ENCODE measurements at regions of chr17 and their contacts with region 1.

Region 1: DNA sequence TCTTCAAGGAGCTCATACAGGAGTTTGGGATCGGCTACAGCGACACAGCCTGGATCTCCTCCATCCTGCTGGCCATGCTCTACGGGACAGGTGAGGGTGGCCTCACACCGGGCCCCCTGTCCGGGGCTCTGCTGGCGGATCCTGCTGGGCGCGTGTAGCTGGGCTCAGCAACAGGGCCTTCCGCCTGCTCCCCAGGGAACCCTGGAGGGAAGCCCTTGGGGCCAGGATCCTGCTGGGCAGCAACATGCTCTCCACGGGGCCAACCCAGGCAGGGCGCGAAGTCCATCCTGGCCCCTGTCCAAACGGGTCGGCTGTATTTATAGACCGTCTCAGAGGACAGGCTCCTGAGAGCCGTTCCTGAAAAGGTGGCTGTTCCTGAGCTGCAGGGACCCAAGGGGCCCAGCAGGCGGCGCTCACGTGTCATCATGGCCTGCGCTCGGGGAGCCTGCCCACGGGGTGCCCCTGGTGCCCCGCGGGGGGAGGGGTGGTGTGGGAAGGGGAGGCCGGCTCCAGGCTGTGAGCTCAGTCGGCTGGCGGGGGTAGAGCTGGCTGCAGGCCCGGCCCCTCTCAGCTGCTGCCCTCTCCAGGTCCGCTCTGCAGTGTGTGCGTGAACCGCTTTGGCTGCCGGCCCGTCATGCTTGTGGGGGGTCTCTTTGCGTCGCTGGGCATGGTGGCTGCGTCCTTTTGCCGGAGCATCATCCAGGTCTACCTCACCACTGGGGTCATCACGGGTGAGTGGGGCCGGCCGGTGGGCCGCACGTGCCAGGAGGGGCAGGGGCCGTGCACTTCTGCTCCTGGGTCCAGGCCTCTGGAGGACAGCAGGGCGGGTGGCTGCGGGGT is 7.5 kb downstream of the SLC16A3 start:
- DNase-seq: peak; percentile 69 to 74 (median 72)
- H3K4me3 ChIP-seq: no peak overlapping the region
- H3K4me3 Mint-ChIP-seq: peak overlapping the region in 1 of 8 donors; percentile 35
- H3K27ac ChIP-seq: peak overlapping the region; percentile 15
- H3K27ac Mint-ChIP-seq: peak overlapping the region in 5 of 7 donors; percentile 41 to 67 (median 64)
- H3K4me1 ChIP-seq: peaks cover 63% of the 10 kb centered on the region
- H3K4me1 Mint-ChIP-seq: peaks cover 10 to 58% (median 39%) of the 10 kb centered on the region in 4 donors
- H3K27me3 ChIP-seq: no peaks in the 10 kb centered on the region
- H3K27me3 Mint-ChIP-seq: no peaks in the 10 kb centered on the region

Region 2: DNA sequence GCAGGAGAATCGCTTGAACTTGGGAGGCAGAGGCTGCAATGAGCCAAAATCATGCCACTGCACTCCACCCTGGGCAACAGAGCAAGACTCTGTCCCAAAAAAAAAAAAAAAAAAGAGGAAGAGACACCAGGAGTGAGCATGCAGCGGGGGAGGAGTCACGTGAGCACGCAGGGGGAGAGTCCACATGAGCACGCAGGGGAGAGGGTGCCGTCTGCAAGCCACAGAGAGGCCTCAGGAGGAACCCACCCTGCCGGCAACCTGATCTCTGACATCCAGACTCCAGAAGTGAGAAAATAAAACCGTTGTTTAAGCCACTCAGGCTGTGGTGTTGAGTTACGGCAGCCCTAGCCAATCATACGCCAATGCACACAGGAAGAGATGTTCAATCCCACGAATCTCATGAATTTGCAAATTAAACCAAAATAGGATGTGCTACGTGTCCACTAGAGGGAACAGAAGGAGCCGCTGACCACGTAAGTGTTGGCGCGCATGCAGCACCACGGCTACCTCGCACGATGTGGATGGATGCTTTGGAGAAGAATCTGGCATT is 65.9 kb before region 1 on chr17:
- CTCF ChIA-PET with region 1: no interaction called
- POLR2A ChIA-PET with region 1: no interaction called
- intact Hi-C with region 1: no loop called
- DNase-seq: no peak
- H3K4me3 ChIP-seq: no peak overlapping the region
- H3K4me3 Mint-ChIP-seq: no peak overlapping the region
- H3K27ac ChIP-seq: no peak overlapping the region
- H3K27ac Mint-ChIP-seq: peak overlapping the region in 1 of 7 donors; percentile 66
- H3K4me1 ChIP-seq: no peaks in the 10 kb centered on the region
- H3K4me1 Mint-ChIP-seq: peaks cover 0 to 7% (median 0%) of the 10 kb centered on the region in 4 donors
- H3K27me3 ChIP-seq: no peaks in the 10 kb centered on the region
- H3K27me3 Mint-ChIP-seq: no peaks in the 10 kb centered on the region

Region 3: GRCh38 chr17:82205719-82206508 is 30.4 kb before region 1 on chr17:
- CTCF ChIA-PET with region 1: interaction called, 14 read pairs
- POLR2A ChIA-PET with region 1: interaction called, 35 read pairs
- intact Hi-C with region 1: no loop called
- DNase-seq: peak; percentile 84 to 87 (median 86)
- H3K4me3 ChIP-seq: no peak overlapping the region
- H3K4me3 Mint-ChIP-seq: peak overlapping the region in 7 of 8 donors; percentile 39 to 81 (median 54)
- H3K27ac ChIP-seq: peak overlapping the region; percentile 61
- H3K27ac Mint-ChIP-seq: peak overlapping the region; percentile 96 to 99 (median 97)
- H3K4me1 ChIP-seq: peaks cover 26% of the 10 kb centered on the region
- H3K4me1 Mint-ChIP-seq: peaks cover 20 to 46% (median 33%) of the 10 kb centered on the region in 4 donors
- H3K27me3 ChIP-seq: no peaks in the 10 kb centered on the region
- H3K27me3 Mint-ChIP-seq: no peaks in the 10 kb centered on the region

Region 4: DNA sequence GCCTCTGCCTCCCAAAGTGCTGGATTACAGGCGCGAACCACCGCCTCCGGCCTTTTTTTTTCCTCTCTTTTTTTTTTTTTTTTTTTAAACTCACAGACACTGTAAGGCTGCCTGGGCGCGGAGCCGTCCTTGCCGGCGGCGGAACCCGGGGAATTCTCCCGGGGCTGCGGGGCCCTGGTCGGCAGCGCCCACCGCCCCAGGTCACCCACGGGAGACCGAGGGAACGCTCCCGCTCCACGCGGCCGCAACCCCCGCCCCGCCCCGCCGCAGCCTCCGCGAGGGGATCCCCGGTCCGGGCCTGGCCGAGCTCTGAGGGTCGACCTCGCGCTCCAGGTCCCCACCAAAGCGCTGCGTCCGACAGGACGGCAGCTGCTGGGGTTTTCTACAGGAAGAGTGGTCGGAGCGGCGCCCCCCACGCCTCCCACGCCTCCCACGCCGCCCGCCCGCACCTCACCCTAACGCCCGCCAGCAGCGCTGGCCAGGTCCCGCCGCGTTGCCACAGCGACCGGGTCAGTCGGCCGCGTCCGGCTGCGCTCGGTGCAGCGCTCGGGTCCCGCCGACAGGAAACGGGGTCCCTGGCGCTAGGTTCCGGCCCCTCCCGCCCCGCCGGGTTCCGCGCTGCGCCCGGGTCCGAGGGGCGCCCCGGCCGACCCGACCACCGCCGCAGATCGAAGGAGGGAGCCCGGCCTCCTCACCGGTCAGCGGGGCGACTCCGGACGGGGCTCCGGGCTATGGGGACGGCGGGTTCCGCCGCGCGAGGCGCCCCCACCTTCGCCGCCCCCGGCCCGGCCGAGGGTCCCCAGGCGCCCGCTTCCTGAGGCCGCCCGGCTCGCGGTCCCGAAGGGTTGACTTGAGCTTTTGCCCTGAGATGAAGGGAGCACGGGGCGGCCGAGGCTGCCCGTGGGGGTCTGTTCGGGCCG is 23.8 kb before region 1 on chr17 and contains the start of gene CCDC57:
- CTCF ChIA-PET with region 1: interaction called, 10 read pairs
- POLR2A ChIA-PET with region 1: interaction called, 7 read pairs
- intact Hi-C with region 1: no loop called
- DNase-seq: peak in 4 of 5 donors; percentile 33 to 55 (median 44)
- H3K4me3 ChIP-seq: peak within 1 kb of the TSS; percentile 3 to 64
- H3K4me3 Mint-ChIP-seq: peak within 1 kb of the TSS; percentile 85 to 94 (median 88)
- H3K27ac ChIP-seq: peak within 1 kb of the TSS; percentile 58
- H3K27ac Mint-ChIP-seq: peak within 1 kb of the TSS; percentile 8 to 98 (median 91)
- H3K4me1 ChIP-seq: peaks cover 49% of the 10 kb centered on the region
- H3K4me1 Mint-ChIP-seq: peaks cover 12 to 40% (median 29%) of the 10 kb centered on the region in 4 donors
- H3K27me3 ChIP-seq: no peaks in the 10 kb centered on the region
- H3K27me3 Mint-ChIP-seq: no peaks in the 10 kb centered on the region
- total RNA-seq, gene CCDC57: 80.5 to 88.7 TPM

Region 5: GRCh38 chr17:82273327-82274133 is 37.2 kb after region 1 on chr17 and contains the start of gene CSNK1D:
- CTCF ChIA-PET with region 1: interaction called, 3 read pairs
- POLR2A ChIA-PET with region 1: interaction called, 4 read pairs
- intact Hi-C with region 1: loop called (anchors 2 kb)
- DNase-seq: peak; percentile 88 to 94 (median 90)
- H3K4me3 ChIP-seq: peak within 1 kb of the TSS; percentile 47 to 76
- H3K4me3 Mint-ChIP-seq: peak within 1 kb of the TSS; percentile 91 to 96 (median 94)
- H3K27ac ChIP-seq: peak within 1 kb of the TSS; percentile 80
- H3K27ac Mint-ChIP-seq: peak within 1 kb of the TSS; percentile 92 to 100 (median 98)
- H3K4me1 ChIP-seq: peaks cover 50% of the 10 kb centered on the region
- H3K4me1 Mint-ChIP-seq: peaks cover 31 to 53% (median 40%) of the 10 kb centered on the region in 4 donors
- H3K27me3 ChIP-seq: no peaks in the 10 kb centered on the region
- H3K27me3 Mint-ChIP-seq: no peaks in the 10 kb centered on the region
- total RNA-seq, gene CSNK1D: 182 TPM

Region 6: GRCh38 chr17:82292251-82293154 is 56.1 kb after region 1 on chr17:
- CTCF ChIA-PET with region 1: interaction called, 28 read pairs
- POLR2A ChIA-PET with region 1: interaction called, 56 read pairs
- intact Hi-C with region 1: no loop called
- DNase-seq: peak; percentile 92 to 95 (median 92)
- H3K4me3 ChIP-seq: peak overlapping the region; percentile 42 to 66
- H3K4me3 Mint-ChIP-seq: peak overlapping the region; percentile 85 to 95 (median 91)
- H3K27ac ChIP-seq: peak overlapping the region; percentile 84
- H3K27ac Mint-ChIP-seq: peak overlapping the region; percentile 90 to 97 (median 95)
- H3K4me1 ChIP-seq: peaks cover 24% of the 10 kb centered on the region
- H3K4me1 Mint-ChIP-seq: peaks cover 29 to 46% (median 36%) of the 10 kb centered on the region in 4 donors
- H3K27me3 ChIP-seq: no peaks in the 10 kb centered on the region
- H3K27me3 Mint-ChIP-seq: no peaks in the 10 kb centered on the region

Region 7: GRCh38 chr17:82315703-82316358 is 79.5 kb after region 1 on chr17:
- CTCF ChIA-PET with region 1: interaction called, 57 read pairs
- POLR2A ChIA-PET with region 1: interaction called, 12 read pairs
- intact Hi-C with region 1: loop called (anchors 1 kb)
- DNase-seq: peak; percentile 48 to 64 (median 51)
- H3K4me3 ChIP-seq: peak overlapping the region; percentile 51 to 88
- H3K4me3 Mint-ChIP-seq: peak overlapping the region in 7 of 8 donors; percentile 89 to 94 (median 93)
- H3K27ac ChIP-seq: peak overlapping the region; percentile 65
- H3K27ac Mint-ChIP-seq: peak overlapping the region in 6 of 7 donors; percentile 88 to 96 (median 93)
- H3K4me1 ChIP-seq: peaks cover 29% of the 10 kb centered on the region
- H3K4me1 Mint-ChIP-seq: peaks cover 7 to 26% (median 15%) of the 10 kb centered on the region in 4 donors
- H3K27me3 ChIP-seq: no peaks in the 10 kb centered on the region
- H3K27me3 Mint-ChIP-seq: no peaks in the 10 kb centered on the region

Region 8: GRCh38 chr17:82320956-82321927 is 84.9 kb after region 1 on chr17:
- CTCF ChIA-PET with region 1: interaction called, 57 read pairs
- POLR2A ChIA-PET with region 1: interaction called, 12 read pairs
- intact Hi-C with region 1: loop called (anchors 1 kb)
- DNase-seq: peak; percentile 79 to 96 (median 83)
- H3K4me3 ChIP-seq: peak overlapping the region in 1 of 2 donors; percentile 47
- H3K4me3 Mint-ChIP-seq: peak overlapping the region; percentile 60 to 88 (median 82)
- H3K27ac ChIP-seq: peak overlapping the region; percentile 66
- H3K27ac Mint-ChIP-seq: peak overlapping the region in 6 of 7 donors; percentile 86 to 96 (median 94)
- H3K4me1 ChIP-seq: peaks cover 41% of the 10 kb centered on the region
- H3K4me1 Mint-ChIP-seq: peaks cover 9 to 31% (median 21%) of the 10 kb centered on the region in 4 donors
- H3K27me3 ChIP-seq: no peaks in the 10 kb centered on the region
- H3K27me3 Mint-ChIP-seq: peaks cover 0 to 2% of the 10 kb centered on the region in 2 donors

Region 9: GRCh38 chr17:82592767-82593589 is 356.6 kb after region 1 on chr17:
- CTCF ChIA-PET with region 1: no interaction called
- POLR2A ChIA-PET with region 1: no interaction called
- intact Hi-C with region 1: no loop called
- DNase-seq: peak; percentile 74 to 87 (median 79)
- H3K4me3 ChIP-seq: peak overlapping the region; percentile 34 to 69
- H3K4me3 Mint-ChIP-seq: peak overlapping the region; percentile 69 to 83 (median 75)
- H3K27ac ChIP-seq: peak overlapping the region; percentile 44
- H3K27ac Mint-ChIP-seq: peak overlapping the region; percentile 43 to 95 (median 86)
- H3K4me1 ChIP-seq: peaks cover 36% of the 10 kb centered on the region
- H3K4me1 Mint-ChIP-seq: peaks cover 17 to 39% (median 26%) of the 10 kb centered on the region in 4 donors
- H3K27me3 ChIP-seq: no peaks in the 10 kb centered on the region
- H3K27me3 Mint-ChIP-seq: no peaks in the 10 kb centered on the region

Measured in CD4-positive, alpha-beta memory T cell (primary cell).